MCF 10A (cell line): ENCODE measurements at regions of chr18 and their contacts with region 1.

Region 1: GRCh38 chr18:76803814-76804213 is 18.5 kb upstream of the ZNF236 start:
- DNase-seq: peak; percentile 84
- H3K4me3 Mint-ChIP-seq: no peak overlapping the region
- H3K27ac Mint-ChIP-seq: no peak overlapping the region
- H3K4me1 Mint-ChIP-seq: peaks cover 29% of the 10 kb centered on the region
- H3K27me3 Mint-ChIP-seq: no peaks in the 10 kb centered on the region
- CTCF ChIP-seq: peak; percentile 74

Region 2: DNA sequence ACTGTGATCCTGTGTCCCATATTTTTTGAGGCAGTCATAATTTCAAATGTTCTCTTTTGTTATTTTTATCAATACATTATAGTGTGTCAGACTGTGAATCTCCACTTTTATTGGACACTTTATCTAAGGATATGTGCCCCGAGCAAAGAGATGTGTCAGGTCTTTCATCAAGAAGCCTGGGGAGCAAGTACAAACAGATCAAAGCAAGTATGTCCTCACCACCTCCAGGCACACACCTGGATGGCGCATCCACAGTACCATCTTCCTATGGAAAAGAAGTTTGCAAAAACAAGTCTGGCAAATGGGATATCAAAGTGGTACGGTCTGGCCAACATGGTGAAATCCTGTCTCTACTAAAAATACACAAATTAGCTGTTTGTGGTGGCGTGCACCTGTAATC is 62.4 kb before region 1 on chr18:
- CTCF ChIA-PET with region 1: interaction called, 13 read pairs
- POLR2A ChIA-PET with region 1: interaction called, 3 read pairs
- intact Hi-C with region 1: no loop called
- DNase-seq: peak; percentile 17
- H3K4me3 Mint-ChIP-seq: no peak overlapping the region
- H3K27ac Mint-ChIP-seq: no peak overlapping the region
- H3K4me1 Mint-ChIP-seq: peaks cover 6% of the 10 kb centered on the region
- H3K27me3 Mint-ChIP-seq: no peaks in the 10 kb centered on the region
- CTCF ChIP-seq: no peak

Region 3: DNA sequence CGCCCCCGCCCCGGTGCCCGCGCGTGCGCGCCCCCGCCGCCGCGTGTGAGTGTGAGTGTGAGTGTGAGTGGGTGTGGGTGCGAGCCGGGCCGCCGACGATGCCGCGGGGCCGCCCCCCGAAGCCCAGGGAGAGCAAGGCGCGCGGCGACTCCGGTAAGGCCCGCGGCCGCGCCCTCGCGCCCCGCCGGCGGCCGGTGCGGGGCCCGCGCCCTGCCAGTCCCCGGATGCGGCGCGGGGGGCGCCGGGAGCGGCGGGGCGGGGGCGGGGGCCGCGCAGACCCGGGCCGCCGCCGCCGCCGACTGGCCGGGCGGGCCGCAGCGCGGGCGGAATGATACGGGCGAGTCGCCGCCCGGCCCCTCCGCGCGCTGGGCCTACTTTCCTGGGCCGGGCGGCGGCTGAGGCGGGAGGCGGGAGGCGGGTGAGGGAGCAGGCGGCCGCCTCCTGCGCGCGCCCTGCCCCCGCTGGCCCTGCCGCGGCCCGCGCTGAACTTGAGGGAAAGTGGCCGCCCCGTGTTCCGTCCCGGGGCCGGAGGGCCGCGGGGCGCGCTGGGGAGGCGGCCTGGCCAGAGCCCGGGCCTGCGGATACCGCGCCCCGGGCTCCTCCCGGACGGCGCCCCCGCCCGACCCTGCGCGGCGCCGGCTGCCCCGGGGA is 18.8 kb after region 1 on chr18 and contains the start of gene ZNF236:
- CTCF ChIA-PET with region 1: interaction called, 95 read pairs
- POLR2A ChIA-PET with region 1: interaction called, 65 read pairs
- intact Hi-C with region 1: no loop called
- DNase-seq: peak; percentile 66
- H3K4me3 Mint-ChIP-seq: peak within 1 kb of the TSS; percentile 71
- H3K27ac Mint-ChIP-seq: peak within 1 kb of the TSS; percentile 57
- H3K4me1 Mint-ChIP-seq: peaks cover 17% of the 10 kb centered on the region
- H3K27me3 Mint-ChIP-seq: no peaks in the 10 kb centered on the region
- CTCF ChIP-seq: no peak
- total RNA-seq, gene ZNF236: 15.3 and 16.1 TPM in 2 replicates

Region 4: DNA sequence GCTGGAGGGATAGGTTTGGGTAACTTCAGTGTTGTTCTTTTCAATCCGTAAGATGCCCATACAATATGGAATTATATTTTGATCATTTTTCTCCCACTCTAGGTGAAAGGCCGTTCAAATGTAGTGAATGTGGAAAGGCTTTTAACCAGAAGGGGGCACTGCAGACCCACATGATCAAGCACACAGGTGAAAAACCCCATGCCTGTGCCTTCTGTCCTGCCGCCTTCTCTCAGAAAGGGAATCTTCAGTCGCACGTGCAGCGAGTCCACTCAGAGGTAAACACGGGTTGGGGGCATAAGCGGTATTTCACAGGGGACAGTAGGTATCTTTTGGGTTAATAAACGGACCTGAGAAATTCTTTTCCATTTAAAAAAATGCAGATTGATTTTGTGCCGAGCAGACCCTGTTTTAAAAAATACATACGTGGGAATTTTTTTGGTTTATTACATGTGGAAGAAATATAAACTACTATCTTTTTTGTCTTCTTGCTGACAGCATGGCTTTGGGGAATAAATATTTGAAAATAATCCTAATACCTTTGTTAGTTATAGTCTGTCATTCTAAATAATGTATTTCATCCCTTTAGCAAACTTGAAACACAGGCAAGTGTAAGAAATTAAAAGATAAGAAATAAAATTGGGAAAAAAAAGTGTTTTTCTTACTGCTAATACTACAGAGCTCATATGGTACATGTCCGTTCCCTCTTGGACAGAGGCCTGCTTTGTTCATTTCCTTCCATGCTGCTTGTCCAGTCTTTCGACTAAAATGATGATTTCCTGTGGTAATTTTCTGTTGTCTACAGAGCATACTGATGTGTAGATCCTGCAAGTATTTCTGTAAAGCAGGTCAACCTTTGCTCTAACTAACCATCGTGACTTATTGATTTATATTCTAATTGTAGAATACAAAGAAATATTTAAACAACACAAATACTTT is 71.8 kb after region 1 on chr18:
- CTCF ChIA-PET with region 1: interaction called, 12 read pairs
- POLR2A ChIA-PET with region 1: interaction called, 3 read pairs
- intact Hi-C with region 1: loop called (anchors 2 kb)
- DNase-seq: peak; percentile 60
- H3K4me3 Mint-ChIP-seq: no peak overlapping the region
- H3K27ac Mint-ChIP-seq: peak overlapping the region; percentile 60
- H3K4me1 Mint-ChIP-seq: no peaks in the 10 kb centered on the region
- H3K27me3 Mint-ChIP-seq: no peaks in the 10 kb centered on the region
- CTCF ChIP-seq: peak; percentile 59

Region 5: DNA sequence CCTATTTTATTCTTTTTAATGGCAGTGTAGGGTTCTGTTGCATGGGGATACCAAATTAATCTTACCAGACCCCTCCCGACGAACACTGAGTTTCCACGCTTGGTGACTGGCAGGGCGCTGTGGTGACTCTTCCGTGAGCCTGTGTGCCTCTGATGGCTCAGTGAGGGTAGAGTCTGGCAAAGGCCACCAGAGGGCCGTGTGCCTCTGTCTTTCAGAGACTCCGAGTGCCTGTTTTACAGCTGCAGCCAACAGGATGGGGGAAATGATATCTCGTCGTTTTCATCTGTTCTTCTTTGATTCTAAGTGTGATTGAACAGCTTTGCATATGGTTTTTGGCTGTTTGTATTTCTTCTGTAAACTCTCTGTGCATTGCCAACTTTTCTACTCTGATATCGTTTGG is 118.3 kb after region 1 on chr18:
- CTCF ChIA-PET with region 1: interaction called, 17 read pairs
- POLR2A ChIA-PET with region 1: no interaction called
- intact Hi-C with region 1: no loop called
- DNase-seq: peak; percentile 5
- H3K4me3 Mint-ChIP-seq: no peak overlapping the region
- H3K27ac Mint-ChIP-seq: no peak overlapping the region
- H3K4me1 Mint-ChIP-seq: peaks cover 5% of the 10 kb centered on the region
- H3K27me3 Mint-ChIP-seq: no peaks in the 10 kb centered on the region
- CTCF ChIP-seq: peak; percentile 10

Region 6: DNA sequence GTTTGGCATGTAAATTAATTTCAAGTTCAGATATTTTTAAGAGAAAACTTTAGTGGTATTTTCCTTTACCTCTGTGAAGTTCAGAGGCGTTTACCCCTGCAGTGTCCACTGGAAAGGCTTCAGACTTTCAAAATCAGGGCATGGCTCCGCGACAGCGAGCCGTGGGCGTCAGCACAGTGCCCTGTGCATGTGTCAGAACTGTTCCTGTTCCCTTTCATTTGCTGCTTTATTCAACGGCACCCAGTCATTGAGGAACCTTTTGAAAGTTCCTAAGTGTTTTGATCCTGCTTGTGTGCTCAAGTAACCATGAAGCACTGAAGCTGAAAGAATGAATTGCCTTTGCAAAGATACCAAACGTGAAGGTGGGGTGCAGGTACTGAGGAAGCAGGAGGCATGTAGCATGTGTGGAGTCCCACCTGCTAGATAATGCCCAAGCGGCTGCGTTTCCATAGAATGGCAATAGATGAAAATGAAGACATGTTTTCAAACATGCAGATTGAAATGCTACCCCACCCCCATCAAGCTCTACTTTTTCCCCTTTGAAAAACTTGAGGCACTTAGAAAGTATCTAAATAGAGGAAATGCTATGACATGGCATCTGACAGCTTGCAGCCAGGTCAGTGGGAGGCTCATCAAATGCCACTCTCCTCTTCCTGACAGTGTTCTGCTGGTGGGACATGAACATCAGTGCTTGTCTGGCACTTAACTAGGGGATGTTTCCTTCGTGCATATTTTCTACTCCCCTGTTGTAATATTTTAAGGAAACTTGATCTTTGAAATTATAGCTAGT is 167.2 kb after region 1 on chr18:
- CTCF ChIA-PET with region 1: interaction called, 12 read pairs
- POLR2A ChIA-PET with region 1: interaction called, 3 read pairs
- intact Hi-C with region 1: no loop called
- DNase-seq: no peak
- H3K4me3 Mint-ChIP-seq: no peak overlapping the region
- H3K27ac Mint-ChIP-seq: no peak overlapping the region
- H3K4me1 Mint-ChIP-seq: no peaks in the 10 kb centered on the region
- H3K27me3 Mint-ChIP-seq: no peaks in the 10 kb centered on the region
- CTCF ChIP-seq: no peak

Region 7: DNA sequence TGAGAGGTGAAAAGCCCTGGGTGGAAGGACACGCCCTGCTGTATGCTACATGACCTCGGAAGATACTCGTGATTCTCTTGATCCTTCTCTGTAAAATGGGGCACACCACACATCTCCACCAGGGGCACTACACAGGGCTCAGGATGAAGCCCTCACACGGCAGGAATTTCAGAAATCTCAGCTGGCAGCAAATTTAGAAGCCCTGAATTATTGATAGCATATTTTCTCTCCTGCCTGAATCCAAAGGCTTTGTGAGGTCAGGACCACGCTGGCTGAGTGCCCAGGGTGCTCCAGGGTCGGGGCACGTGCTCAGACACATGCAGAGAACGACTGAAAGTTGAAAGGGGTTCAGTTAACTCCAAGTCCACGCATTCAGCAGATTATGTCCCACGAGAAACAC is 403.7 kb after region 1 on chr18:
- CTCF ChIA-PET with region 1: interaction called, 5 read pairs
- POLR2A ChIA-PET with region 1: no interaction called
- intact Hi-C with region 1: loop called (anchors 2 kb)
- DNase-seq: peak; percentile 69
- H3K4me3 Mint-ChIP-seq: no peak overlapping the region
- H3K27ac Mint-ChIP-seq: no peak overlapping the region
- H3K4me1 Mint-ChIP-seq: peaks cover 6% of the 10 kb centered on the region
- H3K27me3 Mint-ChIP-seq: no peaks in the 10 kb centered on the region
- CTCF ChIP-seq: peak; percentile 31